Common myeloid progenitor, CD34-positive (primary cell): ENCODE measurements at regions of chr12 and their contacts with region 1.

Region 1: GRCh38 chr12:57782608-57783465 is at the start of gene TSFM:
- DNase-seq: peak; percentile 97 to 98 (median 97)
- H3K4me3 ChIP-seq: peak within 1 kb of the TSS; percentile 93 to 100 (median 99)
- H3K27ac ChIP-seq: peak within 1 kb of the TSS; percentile 75 to 91
- H3K4me1 ChIP-seq: peaks cover 9 to 34% (median 31%) of the 10 kb centered on the region in 4 experiments
- H3K27me3 ChIP-seq: no peaks in the 10 kb centered on the region

Region 2: GRCh38 chr12:57520053-57520871 is 262.6 kb before region 1 on chr12 and contains the start of gene DDIT3:
- CTCF ChIA-PET with region 1: no interaction called
- POLR2A ChIA-PET with region 1: no interaction called
- DNase-seq: peak; percentile 99
- H3K4me3 ChIP-seq: peak within 1 kb of the TSS; percentile 75 to 99 (median 96)
- H3K27ac ChIP-seq: peak within 1 kb of the TSS; percentile 99 to 100
- H3K4me1 ChIP-seq: peaks cover 14 to 53% (median 52%) of the 10 kb centered on the region in 4 experiments
- H3K27me3 ChIP-seq: no peaks in the 10 kb centered on the region

Region 3: DNA sequence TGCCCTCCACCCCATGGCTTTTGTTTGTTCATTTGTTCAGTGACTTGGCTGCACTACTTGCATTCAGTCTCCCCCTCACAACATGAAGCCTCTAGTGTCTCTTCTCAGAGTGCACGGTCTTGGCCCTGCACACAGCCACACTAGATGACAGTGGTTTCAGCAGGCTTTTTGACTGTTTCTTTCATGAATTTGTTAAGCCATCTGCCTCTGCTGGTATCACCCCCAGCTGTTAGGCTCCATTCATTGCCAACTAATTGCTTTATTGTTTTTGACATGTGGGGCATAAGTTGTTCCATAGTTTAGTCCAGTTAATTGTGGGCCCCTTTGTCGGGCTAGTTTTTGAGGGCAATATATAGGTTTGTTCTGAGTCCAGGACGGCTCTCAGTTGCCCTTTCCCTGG is 70.1 kb before region 1 on chr12:
- CTCF ChIA-PET with region 1: no interaction called
- POLR2A ChIA-PET with region 1: no interaction called
- DNase-seq: no peak
- H3K4me3 ChIP-seq: no peak overlapping the region
- H3K27ac ChIP-seq: no peak overlapping the region
- H3K4me1 ChIP-seq: peaks cover 0 to 3% (median 0%) of the 10 kb centered on the region in 4 experiments
- H3K27me3 ChIP-seq: no peaks in the 10 kb centered on the region

Region 4: GRCh38 chr12:57754411-57755193 is 28.2 kb before region 1 on chr12 and contains the start of gene MARCHF9:
- CTCF ChIA-PET with region 1: interaction called, 74 read pairs
- POLR2A ChIA-PET with region 1: interaction called, 3 read pairs
- DNase-seq: peak; percentile 61 to 77 (median 70)
- H3K4me3 ChIP-seq: peak within 1 kb of the TSS; percentile 59 to 84 (median 74)
- H3K27ac ChIP-seq: peak within 1 kb of the TSS in 1 of 2 experiments; percentile 49
- H3K4me1 ChIP-seq: peaks cover 18 to 53% (median 48%) of the 10 kb centered on the region in 4 experiments
- H3K27me3 ChIP-seq: peaks cover 0 to 4% (median 0%) of the 10 kb centered on the region in 5 experiments

Region 5: DNA sequence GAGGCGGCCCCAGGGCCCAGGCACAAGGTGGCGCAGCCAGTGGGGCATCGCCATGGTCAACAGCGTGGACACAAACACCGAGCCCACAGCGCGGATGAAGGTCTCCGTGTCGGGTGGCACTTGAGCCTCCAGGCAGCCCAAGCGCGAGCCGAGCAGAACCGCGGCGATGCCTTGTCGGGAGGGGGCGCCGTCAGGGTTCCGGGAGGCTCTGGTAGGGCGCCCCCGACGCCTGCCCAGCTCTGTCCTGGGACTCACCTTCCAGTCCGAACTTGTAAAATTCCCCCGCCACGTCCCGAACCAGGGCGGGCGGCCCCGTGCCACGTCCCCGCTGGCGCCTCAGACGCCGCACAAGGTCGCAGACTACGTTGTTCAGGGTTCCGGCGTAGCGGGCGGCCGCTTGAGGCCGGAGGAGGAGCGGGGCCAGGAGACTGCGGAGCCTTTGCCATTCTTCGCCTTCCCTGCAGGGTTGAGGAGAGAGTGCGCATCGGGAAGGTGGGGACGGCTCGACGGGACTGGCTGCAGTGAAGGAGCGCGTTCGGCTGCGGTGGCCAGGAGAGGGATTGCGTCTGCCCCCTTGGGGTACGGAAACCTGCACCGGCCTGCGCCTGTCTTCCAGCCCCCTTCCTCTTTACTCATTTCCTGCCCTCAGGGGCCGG is 17.7 kb before region 1 on chr12:
- CTCF ChIA-PET with region 1: interaction called, 74 read pairs
- POLR2A ChIA-PET with region 1: no interaction called
- DNase-seq: peak in 2 of 3 donors; percentile 60 to 67
- H3K4me3 ChIP-seq: peak overlapping the region; percentile 30 to 77 (median 58)
- H3K27ac ChIP-seq: no peak overlapping the region
- H3K4me1 ChIP-seq: peaks cover 0 to 29% (median 26%) of the 10 kb centered on the region in 4 experiments
- H3K27me3 ChIP-seq: peaks cover 0 to 50% (median 20%) of the 10 kb centered on the region in 5 experiments

Region 6: DNA sequence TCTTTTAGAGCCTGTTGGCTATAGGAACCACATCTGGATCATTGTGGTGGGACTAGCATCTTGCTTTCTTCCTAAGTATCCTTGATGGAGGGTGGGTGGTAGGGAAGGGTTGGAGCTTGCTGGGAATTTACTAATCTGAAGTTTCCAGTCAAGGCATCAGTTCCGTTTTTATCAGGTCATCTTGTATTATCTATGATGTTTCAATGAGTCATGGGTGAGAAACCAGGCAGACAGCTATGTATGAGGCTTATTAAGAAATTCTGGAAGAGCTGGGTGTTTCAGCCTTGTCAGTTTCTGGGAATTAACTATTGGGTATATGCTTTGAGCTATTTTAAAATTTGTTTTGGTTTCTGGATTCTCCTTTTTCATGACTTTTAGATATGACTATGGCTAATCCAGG is 11.1 kb after region 1 on chr12:
- CTCF ChIA-PET with region 1: interaction called, 14 read pairs
- POLR2A ChIA-PET with region 1: no interaction called
- DNase-seq: no peak
- H3K4me3 ChIP-seq: no peak overlapping the region
- H3K27ac ChIP-seq: no peak overlapping the region
- H3K4me1 ChIP-seq: peaks cover 0 to 7% (median 0%) of the 10 kb centered on the region in 4 experiments
- H3K27me3 ChIP-seq: no peaks in the 10 kb centered on the region

Region 7: GRCh38 chr12:57803319-57803893 is 20.6 kb after region 1 on chr12:
- CTCF ChIA-PET with region 1: interaction called, 11 read pairs
- POLR2A ChIA-PET with region 1: no interaction called
- DNase-seq: peak; percentile 14 to 36 (median 21)
- H3K4me3 ChIP-seq: no peak overlapping the region
- H3K27ac ChIP-seq: no peak overlapping the region
- H3K4me1 ChIP-seq: no peaks in the 10 kb centered on the region
- H3K27me3 ChIP-seq: no peaks in the 10 kb centered on the region